ENCODE measurements at regions of chr7 and their contacts with region 1.

Region 1: GRCh38 chr7:112556633-112557032 is 75.8 kb downstream of the LSMEM1 start:
- DNase-seq: no peak
- ATAC-seq: no peak
- H3K4me3 ChIP-seq: no peak overlapping the region
- H3K27ac ChIP-seq: no peak overlapping the region
- H3K4me1 ChIP-seq: no peaks in the 10 kb centered on the region
- H3K27me3 ChIP-seq: no peaks in the 10 kb centered on the region
- CTCF ChIP-seq: no peak
- POLR2A ChIP-seq: no peak

Region 2: DNA sequence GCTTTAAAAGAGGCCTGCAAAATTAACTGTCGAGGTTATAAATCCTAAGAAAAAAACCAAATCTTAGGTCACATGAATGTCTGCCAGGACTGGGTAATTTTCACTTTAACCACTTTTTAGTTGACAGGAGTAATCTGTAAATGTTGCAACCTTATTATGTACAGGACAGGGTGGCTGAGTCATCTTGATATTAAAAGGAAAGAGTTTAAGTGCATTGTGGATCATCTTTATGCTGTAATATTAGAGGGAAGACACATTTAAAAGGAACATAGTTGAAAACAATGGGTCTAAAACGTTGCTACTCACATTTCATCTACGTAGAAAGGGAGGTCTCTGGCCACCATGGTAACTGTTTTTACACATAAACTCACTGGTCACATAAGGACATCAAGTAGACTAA is 39.6 kb after region 1 on chr7:
- intact Hi-C with region 1: loop called in 1 of 10 experiments (anchors 5 kb)
- DNase-seq: no peak
- ATAC-seq: peak in 1 of 4 donors; percentile 38
- H3K4me3 ChIP-seq: no peak overlapping the region
- H3K27ac ChIP-seq: no peak overlapping the region
- H3K4me1 ChIP-seq: peaks cover 0 to 24% (median 0%) of the 10 kb centered on the region in 12 donors
- H3K27me3 ChIP-seq: no peaks in the 10 kb centered on the region
- CTCF ChIP-seq: no peak
- POLR2A ChIP-seq: no peak

Region 3: DNA sequence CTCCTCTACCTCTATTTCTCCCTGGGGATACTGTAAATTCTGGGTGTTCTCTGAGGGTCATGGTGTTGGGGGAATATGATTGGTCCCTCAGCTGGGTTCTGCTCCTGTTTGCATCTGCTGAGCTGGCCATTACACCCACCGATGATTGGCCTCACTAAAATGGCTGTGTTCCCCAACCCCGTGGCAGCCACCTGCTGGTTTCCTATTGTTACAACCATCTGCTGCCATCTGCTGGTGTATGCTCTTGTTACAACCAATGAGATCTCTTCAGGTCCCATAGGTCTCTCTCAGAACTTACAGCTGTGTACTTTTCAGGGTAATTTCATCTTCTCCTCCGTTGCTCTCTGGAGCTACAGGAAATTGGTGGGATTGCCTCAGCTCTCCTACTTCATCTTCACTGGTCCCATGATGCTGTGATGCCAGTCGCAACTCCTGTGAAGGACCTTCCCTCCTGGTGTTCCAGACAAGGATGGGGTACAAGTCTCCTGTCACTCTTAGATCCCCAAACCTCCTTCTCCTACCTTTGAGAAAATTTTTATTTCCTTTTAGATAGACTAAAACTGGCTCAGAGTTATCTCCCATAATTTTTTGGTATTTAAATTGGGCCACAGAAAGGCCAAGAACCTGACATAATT is 865.2 kb after region 1 on chr7:
- intact Hi-C with region 1: loop called in 8 of 10 experiments (anchors 2 to 5 kb)
- DNase-seq: peak; percentile 67 to 84 (median 67)
- ATAC-seq: peak; percentile 81 to 94 (median 86)
- H3K4me3 ChIP-seq: no peak overlapping the region
- H3K27ac ChIP-seq: no peak overlapping the region
- H3K4me1 ChIP-seq: peaks cover 0 to 2% (median 0%) of the 10 kb centered on the region in 12 donors
- H3K27me3 ChIP-seq: no peaks in the 10 kb centered on the region
- CTCF ChIP-seq: peak; percentile 55 to 83 (median 74)
- POLR2A ChIP-seq: no peak